ENCODE measurements at regions of chr15 and their contacts with region 1.

Region 1: GRCh38 chr15:92714477-92715401 is 59.2 kb upstream of the FAM174B start:
- DNase-seq: peak; percentile 74 to 88 (median 86)
- ATAC-seq: peak; percentile 94
- H3K4me3 ChIP-seq: peak overlapping the region; percentile 57
- H3K27ac ChIP-seq: peak overlapping the region; percentile 11
- H3K4me1 ChIP-seq: no peaks in the 10 kb centered on the region
- H3K27me3 ChIP-seq: no peaks in the 10 kb centered on the region

Region 2: GRCh38 chr15:92097474-92098178 is 617.1 kb before region 1 on chr15:
- intact Hi-C with region 1: loop called in 1 of 4 experiments (anchors 10 kb)
- DNase-seq: no peak
- ATAC-seq: peak; percentile 71 to 76
- H3K4me3 ChIP-seq: no peak overlapping the region
- H3K27ac ChIP-seq: no peak overlapping the region
- H3K4me1 ChIP-seq: peaks cover 2% of the 10 kb centered on the region
- H3K27me3 ChIP-seq: no peaks in the 10 kb centered on the region

Region 3: DNA sequence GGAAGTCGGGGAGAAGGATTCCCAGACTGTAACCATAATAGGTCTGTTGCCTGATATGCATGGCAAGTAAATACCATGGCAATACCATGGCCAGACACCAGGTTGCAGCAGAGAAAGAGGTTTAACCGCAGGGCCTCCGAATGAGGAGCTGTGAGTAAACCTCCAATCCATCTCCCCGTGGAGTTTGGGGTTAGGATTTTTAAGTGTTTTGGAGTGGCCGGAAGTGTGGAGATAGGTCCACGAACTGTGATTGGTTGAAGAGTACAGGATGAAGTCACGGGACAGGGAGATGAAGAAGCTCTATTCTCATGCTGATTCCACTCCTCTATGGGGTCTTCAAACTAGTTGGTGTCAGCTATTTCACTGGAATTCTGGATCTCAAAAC is 193.1 kb before region 1 on chr15:
- intact Hi-C with region 1: loop called (anchors 2 to 10 kb)
- DNase-seq: peak; percentile 74 to 84 (median 76)
- ATAC-seq: peak; percentile 91 to 93
- H3K4me3 ChIP-seq: no peak overlapping the region
- H3K27ac ChIP-seq: no peak overlapping the region
- H3K4me1 ChIP-seq: peaks cover 2% of the 10 kb centered on the region
- H3K27me3 ChIP-seq: no peaks in the 10 kb centered on the region

Region 4: GRCh38 chr15:92527197-92527596 is 187.5 kb before region 1 on chr15:
- intact Hi-C with region 1: loop called in 3 of 4 experiments (anchors 5 to 10 kb)
- DNase-seq: peak in 1 of 3 donors; percentile 47
- ATAC-seq: peak; percentile 57 to 80
- H3K4me3 ChIP-seq: no peak overlapping the region
- H3K27ac ChIP-seq: peak overlapping the region; percentile 25
- H3K4me1 ChIP-seq: no peaks in the 10 kb centered on the region
- H3K27me3 ChIP-seq: no peaks in the 10 kb centered on the region

Region 5: DNA sequence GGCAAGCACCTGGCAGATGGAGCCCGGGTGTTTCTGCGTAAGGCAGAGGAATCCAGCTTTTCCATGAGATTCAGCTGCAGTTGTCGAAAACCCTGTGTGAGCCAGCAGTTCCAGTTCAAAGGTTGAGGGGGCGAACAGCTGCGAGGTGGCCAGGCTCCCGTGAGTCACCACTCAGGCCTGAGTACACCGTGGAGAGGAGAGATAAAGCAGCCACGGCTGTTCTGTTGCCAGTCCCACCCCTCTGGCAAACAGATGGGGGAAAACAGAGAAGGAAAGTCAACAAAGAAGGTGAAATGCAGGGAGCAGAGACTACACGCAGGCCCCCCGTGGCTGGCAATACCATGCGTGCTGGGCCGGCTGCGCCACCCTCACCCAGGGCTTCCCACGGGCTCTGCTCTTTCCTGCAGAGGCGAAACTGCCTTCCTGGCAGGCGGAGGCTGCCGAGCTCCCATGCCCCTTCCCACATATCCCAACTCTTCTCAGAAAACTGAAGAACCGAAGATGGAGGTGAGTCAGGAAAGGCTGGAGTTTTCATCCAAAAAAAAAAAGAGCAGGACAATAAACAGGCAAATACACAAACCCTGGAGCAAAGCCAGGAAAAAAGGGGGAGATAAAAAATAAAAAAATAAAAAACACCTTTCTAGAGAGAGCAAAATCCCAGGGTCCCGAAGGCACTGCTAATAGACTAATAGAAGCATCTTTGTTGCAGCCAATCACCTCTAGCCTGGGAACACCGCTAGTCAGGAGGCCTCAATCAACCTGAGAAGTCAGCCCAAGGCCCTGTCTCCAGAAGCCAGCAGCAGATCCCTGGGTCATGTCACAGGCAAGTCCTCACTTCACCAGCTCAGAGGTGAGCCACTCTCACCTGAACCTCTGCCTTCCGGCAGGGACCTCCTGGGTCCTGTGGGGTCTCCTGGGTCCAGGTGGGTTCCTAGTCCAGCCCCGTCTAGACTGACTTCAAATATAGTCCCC is 96.9 kb before region 1 on chr15:
- intact Hi-C with region 1: loop called in 1 of 4 experiments (anchors 10 kb)
- DNase-seq: peak; percentile 76 to 83 (median 77)
- ATAC-seq: peak; percentile 85 to 91
- H3K4me3 ChIP-seq: no peak overlapping the region
- H3K27ac ChIP-seq: peak overlapping the region; percentile 49
- H3K4me1 ChIP-seq: peaks cover 10% of the 10 kb centered on the region
- H3K27me3 ChIP-seq: no peaks in the 10 kb centered on the region

Measured in right cardiac atrium (tissue), 5 donors.